ENCODE measurements at regions of chr17 and their contacts with region 1.

Region 1: GRCh38 chr17:1724506-1725362 is at the start of gene WDR81:
- DNase-seq: peak; percentile 85
- ATAC-seq: peak; percentile 55
- H3K4me3 Mint-ChIP-seq: peak within 1 kb of the TSS; percentile 78
- H3K27ac Mint-ChIP-seq: peak within 1 kb of the TSS; percentile 85
- H3K4me1 Mint-ChIP-seq: peaks cover 63% of the 10 kb centered on the region
- H3K27me3 Mint-ChIP-seq: no peaks in the 10 kb centered on the region
- CTCF ChIP-seq: no peak
- total RNA-seq, gene WDR81: 42.7 and 48.4 TPM in 2 replicates

Region 2: GRCh38 chr17:1379930-1380313 is 344.8 kb before region 1 on chr17:
- CTCF ChIA-PET with region 1: no interaction called
- POLR2A ChIA-PET with region 1: no interaction called
- intact Hi-C with region 1: no loop called
- DNase-seq: no peak
- ATAC-seq: peak; percentile 61
- H3K4me3 Mint-ChIP-seq: peak overlapping the region; percentile 42
- H3K27ac Mint-ChIP-seq: peak overlapping the region; percentile 71
- H3K4me1 Mint-ChIP-seq: peaks cover 76% of the 10 kb centered on the region
- H3K27me3 Mint-ChIP-seq: no peaks in the 10 kb centered on the region
- CTCF ChIP-seq: no peak

Region 3: DNA sequence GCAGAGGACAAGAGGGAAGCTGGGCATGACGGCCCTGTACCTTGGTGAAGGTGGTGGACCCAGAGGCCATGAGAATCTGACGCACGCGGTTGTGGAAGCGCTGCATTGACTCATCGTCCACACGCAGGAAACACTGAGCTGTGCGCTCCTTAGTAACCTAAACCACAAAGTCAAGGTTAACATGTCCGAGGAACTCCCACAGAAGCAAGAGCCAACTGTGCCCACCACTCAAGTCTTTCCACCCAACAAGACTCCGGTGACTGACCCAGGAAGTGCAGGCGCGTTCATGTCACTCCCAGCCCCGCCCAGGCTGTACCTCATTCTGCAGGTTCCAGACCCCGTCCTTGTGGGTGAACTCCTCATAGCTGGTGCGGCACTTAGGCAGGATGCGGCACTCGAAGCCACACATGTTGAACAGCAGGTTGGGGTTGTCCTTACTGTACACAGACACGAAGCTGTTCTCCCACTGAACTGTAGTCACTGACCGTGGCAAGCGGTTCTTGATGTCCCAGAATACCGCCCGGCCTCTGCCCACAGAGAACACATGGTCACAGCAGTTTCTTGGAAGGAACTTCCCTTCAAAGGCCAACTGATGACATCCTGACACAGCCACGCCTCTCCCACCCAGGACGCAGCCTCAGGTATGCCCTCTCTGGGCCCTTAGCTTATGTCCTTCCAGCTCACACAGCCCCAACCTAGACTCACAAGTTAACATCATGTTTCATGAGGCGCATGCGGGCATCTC is 51.5 kb before region 1 on chr17:
- CTCF ChIA-PET with region 1: interaction called, 4 read pairs
- POLR2A ChIA-PET with region 1: no interaction called
- intact Hi-C with region 1: loop called (anchors 1 kb)
- DNase-seq: no peak
- ATAC-seq: no peak
- H3K4me3 Mint-ChIP-seq: no peak overlapping the region
- H3K27ac Mint-ChIP-seq: no peak overlapping the region
- H3K4me1 Mint-ChIP-seq: no peaks in the 10 kb centered on the region
- H3K27me3 Mint-ChIP-seq: no peaks in the 10 kb centered on the region
- CTCF ChIP-seq: no peak

Region 4: DNA sequence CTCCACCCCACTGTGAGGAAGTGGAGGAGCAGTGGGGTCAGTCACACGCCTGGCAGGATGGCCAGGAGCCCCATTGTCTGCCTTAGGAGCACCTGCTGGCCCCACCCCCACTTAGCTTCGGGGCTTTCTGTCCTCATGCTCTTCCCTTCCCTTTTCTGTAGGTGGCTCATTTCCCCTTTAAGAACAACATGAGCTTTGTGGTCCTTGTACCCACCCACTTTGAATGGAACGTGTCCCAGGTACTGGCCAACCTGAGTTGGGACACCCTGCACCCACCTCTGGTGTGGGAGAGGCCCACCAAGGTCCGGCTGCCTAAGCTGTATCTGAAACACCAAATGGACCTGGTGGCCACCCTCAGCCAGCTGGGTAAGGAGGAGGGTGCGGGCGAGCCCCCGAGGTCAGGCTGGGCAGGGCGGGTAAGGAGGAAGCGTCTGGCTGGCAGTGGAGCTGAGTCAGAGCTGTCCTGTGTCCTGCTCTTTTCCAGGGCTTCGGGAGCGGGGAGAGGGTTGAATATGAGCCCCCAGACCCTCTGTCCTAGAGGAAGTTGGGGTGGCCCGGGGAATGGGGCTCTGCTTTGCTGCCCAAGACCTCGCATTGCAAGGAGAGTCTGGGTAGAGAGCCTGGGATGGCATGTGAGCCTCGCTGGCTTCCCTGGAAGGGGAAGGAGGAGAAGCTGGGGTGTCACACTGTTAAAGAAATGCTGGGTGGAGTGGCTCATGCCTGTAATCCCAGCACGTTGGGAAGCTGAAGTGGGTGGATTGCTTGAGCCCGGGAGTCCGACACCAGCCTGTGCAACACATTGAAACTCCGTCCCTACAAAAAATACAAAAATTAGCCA is 27.9 kb after region 1 on chr17:
- CTCF ChIA-PET with region 1: interaction called, 19 read pairs
- POLR2A ChIA-PET with region 1: interaction called, 7 read pairs
- intact Hi-C with region 1: no loop called
- DNase-seq: no peak
- ATAC-seq: peak; percentile 86
- H3K4me3 Mint-ChIP-seq: peak overlapping the region; percentile 38
- H3K27ac Mint-ChIP-seq: no peak overlapping the region
- H3K4me1 Mint-ChIP-seq: peaks cover 15% of the 10 kb centered on the region
- H3K27me3 Mint-ChIP-seq: no peaks in the 10 kb centered on the region
- CTCF ChIP-seq: no peak

Region 5: DNA sequence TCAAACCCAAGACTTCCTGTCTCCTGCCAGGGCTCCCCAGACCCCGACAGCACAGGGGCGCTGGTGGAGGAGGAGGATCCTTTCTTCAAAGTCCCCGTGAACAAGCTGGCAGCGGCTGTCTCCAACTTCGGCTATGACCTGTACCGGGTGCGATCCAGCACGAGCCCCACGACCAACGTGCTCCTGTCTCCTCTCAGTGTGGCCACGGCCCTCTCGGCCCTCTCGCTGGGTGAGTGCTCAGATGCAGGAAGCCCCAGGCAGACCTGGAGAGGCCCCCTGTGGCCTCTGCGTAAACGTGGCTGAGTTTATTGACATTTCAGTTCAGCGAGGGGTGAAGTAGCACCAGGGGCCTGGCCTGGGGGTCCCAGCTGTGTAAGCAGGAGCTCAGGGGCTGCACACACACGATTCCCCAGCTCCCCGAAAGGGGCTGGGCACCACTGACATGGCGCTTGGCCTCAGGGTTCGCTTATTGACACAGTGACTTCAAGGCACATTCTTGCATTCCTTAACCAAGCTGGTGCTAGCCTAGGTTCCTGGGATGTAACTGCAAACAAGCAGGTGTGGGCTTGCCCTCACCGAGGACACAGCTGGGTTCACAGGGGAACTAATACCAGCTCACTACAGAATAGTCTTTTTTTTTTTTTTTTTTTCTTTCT is 45.2 kb after region 1 on chr17:
- CTCF ChIA-PET with region 1: interaction called, 4 read pairs
- POLR2A ChIA-PET with region 1: interaction called, 44 read pairs
- intact Hi-C with region 1: loop called (anchors 1 kb)
- DNase-seq: no peak
- ATAC-seq: peak; percentile 46
- H3K4me3 Mint-ChIP-seq: peak overlapping the region; percentile 58
- H3K27ac Mint-ChIP-seq: peak overlapping the region; percentile 82
- H3K4me1 Mint-ChIP-seq: peaks cover 52% of the 10 kb centered on the region
- H3K27me3 Mint-ChIP-seq: no peaks in the 10 kb centered on the region
- CTCF ChIP-seq: no peak

Region 6: GRCh38 chr17:1829592-1830257 is 105.0 kb after region 1 on chr17 and contains the starts of genes RPA1 and SMYD4:
- CTCF ChIA-PET with region 1: interaction called, 5 read pairs
- POLR2A ChIA-PET with region 1: interaction called, 20 read pairs
- intact Hi-C with region 1: no loop called
- DNase-seq: peak; percentile 94
- ATAC-seq: peak; percentile 94
- H3K4me3 Mint-ChIP-seq: peak within 1 kb of the TSS; percentile 91
- H3K27ac Mint-ChIP-seq: peak within 1 kb of the TSS; percentile 83
- H3K4me1 Mint-ChIP-seq: peaks cover 44% of the 10 kb centered on the region
- H3K27me3 Mint-ChIP-seq: no peaks in the 10 kb centered on the region
- CTCF ChIP-seq: no peak
- total RNA-seq, gene RPA1: 99.8 and 109 TPM in 2 replicates
- total RNA-seq, gene SMYD4: 19.9 and 21.8 TPM in 2 replicates

Region 7: DNA sequence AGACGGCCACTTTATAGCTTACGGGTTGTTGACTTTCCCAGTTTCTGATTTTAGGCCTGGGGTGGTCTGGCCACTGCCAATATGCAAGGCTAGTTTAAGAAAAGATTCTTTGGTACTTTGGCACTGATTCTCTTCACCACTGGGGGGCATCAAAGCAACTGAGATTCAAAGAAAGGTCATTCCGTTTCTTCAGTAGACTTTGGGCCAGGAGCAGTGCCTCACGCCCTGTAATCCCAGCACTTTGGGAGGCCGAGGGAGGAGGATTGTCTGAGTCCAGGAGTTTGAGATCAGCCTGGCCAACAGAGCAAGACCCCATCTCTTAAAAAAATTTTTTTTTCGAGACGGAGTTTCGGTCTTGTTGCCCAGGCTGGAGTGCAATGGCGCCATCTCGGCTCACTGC is 158.1 kb after region 1 on chr17:
- CTCF ChIA-PET with region 1: interaction called, 10 read pairs
- POLR2A ChIA-PET with region 1: interaction called, 4 read pairs
- intact Hi-C with region 1: no loop called
- DNase-seq: no peak
- ATAC-seq: peak; percentile 60
- H3K4me3 Mint-ChIP-seq: no peak overlapping the region
- H3K27ac Mint-ChIP-seq: no peak overlapping the region
- H3K4me1 Mint-ChIP-seq: no peaks in the 10 kb centered on the region
- H3K27me3 Mint-ChIP-seq: no peaks in the 10 kb centered on the region
- CTCF ChIP-seq: no peak

Region 8: GRCh38 chr17:1963250-1963649 is 238.5 kb after region 1 on chr17:
- CTCF ChIA-PET with region 1: no interaction called
- POLR2A ChIA-PET with region 1: no interaction called
- intact Hi-C with region 1: no loop called
- DNase-seq: no peak
- ATAC-seq: no peak
- H3K4me3 Mint-ChIP-seq: no peak overlapping the region
- H3K27ac Mint-ChIP-seq: no peak overlapping the region
- H3K4me1 Mint-ChIP-seq: no peaks in the 10 kb centered on the region
- H3K27me3 Mint-ChIP-seq: peaks cover 17% of the 10 kb centered on the region
- CTCF ChIP-seq: no peak

Measured in activated B cell treated with CpG ODN at 0.5 μM for 24 hours (primary cell).